ENCODE measurements at regions of chr19 and their contacts with region 1.

Region 1: DNA sequence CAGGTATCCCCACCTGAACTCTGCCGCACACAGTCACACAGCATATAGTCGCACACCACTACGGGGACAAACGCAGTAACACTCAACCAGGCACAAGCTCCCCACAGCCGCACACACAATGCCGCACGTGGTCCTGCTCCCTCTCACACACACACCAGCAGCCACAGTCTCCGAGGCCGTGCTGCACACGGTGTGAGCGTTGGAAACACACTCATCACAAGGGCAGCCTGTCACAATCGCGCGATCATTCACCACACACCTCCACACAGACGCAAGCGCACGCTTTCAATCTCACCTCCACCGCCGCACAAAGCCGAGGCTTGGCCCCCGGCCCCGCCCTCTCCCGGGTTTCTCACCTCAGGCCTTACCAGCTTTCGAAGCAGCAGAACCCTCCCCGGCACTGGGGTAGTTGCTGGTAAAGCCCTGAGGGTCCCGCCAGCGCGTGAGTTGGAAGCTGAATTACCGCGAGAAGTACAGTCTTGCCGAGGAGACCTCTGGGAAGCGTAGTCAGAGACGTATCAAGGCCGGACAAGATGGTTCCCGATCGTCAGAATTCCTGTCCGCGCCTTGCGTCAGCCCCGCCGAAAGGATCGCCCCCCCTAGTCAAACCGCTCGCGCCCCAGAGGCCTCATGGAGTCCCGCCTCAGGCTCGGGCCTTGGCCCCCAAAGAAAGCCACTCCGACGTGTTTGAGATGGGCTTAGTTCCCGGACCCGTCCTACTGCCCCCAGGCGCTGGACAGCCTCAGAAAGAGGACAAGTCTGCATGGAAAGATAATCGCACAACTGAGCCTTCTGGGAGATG is at the start of gene ZNF566:
- H3K4me3 ChIP-seq: peak within 1 kb of the TSS; percentile 58
- H3K27ac ChIP-seq: peak within 1 kb of the TSS; percentile 95
- H3K4me1 ChIP-seq: 0 out of 2 replicates have a peak, but pooled peaks cover 2% of the 10 kb centered on the region
- CTCF ChIP-seq: peak; percentile 66

Region 2: GRCh38 chr19:36214386-36215275 is 274.7 kb before region 1 on chr19 and contains the starts of genes ZNF146 and ZNF565:
- CTCF ChIA-PET with region 1: no interaction called
- POLR2A ChIA-PET with region 1: interaction called, 17 read pairs
- H3K4me3 ChIP-seq: peak within 1 kb of the TSS; percentile 67
- H3K27ac ChIP-seq: peak within 1 kb of the TSS; percentile 93
- H3K4me1 ChIP-seq: peaks cover 7% of the 10 kb centered on the region
- CTCF ChIP-seq: peak; percentile 75; the same call in 1 of the 2 replicates

Region 3: GRCh38 chr19:36404498-36404897 is 84.8 kb before region 1 on chr19:
- CTCF ChIA-PET with region 1: interaction called, 3 read pairs
- POLR2A ChIA-PET with region 1: interaction called, 15 read pairs
- H3K4me3 ChIP-seq: no peak overlapping the region
- H3K27ac ChIP-seq: no peak overlapping the region
- H3K4me1 ChIP-seq: no peaks in the 10 kb centered on the region
- CTCF ChIP-seq: no peak

Region 4: GRCh38 chr19:36460046-36460445 is 29.3 kb before region 1 on chr19:
- CTCF ChIA-PET with region 1: no interaction called
- POLR2A ChIA-PET with region 1: no interaction called
- H3K4me3 ChIP-seq: no peak overlapping the region
- H3K27ac ChIP-seq: no peak overlapping the region
- H3K4me1 ChIP-seq: no peaks in the 10 kb centered on the region
- CTCF ChIP-seq: no peak

Region 5: DNA sequence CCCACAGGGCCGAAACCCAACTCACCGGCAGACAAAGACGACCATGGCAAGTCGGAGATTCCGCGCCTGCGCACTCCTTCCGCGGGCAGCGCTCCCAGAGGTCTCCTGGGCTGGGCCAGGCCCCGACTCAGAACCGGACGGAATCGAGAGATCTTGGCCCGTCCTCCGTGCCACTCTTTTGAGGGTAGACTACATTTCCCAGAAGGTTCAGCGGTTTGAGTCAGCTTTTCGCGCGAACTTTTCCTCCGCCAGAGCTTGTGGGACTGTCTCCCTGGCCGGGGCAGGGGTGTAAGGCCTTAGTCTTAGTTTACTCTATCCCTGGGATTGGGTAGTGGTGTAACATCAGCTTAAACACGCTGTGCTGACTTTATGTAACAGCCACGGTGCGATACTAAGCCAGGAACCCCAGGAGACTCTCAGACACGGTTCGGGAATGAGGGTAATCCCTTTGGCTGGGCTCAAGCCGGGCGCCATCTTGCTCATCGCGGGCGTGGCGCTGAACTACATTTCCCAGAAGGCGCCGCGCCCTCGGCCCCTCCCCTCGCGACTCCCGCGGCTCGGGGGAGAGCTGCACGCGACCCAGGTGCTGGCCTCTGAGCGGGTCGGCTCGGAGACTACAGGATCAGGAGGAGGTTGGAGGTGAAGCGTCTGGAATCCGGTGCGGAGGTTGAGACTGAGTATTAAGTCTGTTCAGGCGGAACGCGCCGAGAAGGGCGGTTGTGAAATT is 39.0 kb after region 1 on chr19 and contains the start of gene ZNF260:
- CTCF ChIA-PET with region 1: interaction called, 3 read pairs
- POLR2A ChIA-PET with region 1: interaction called, 56 read pairs
- H3K4me3 ChIP-seq: peak within 1 kb of the TSS; percentile 91
- H3K27ac ChIP-seq: peak within 1 kb of the TSS; percentile 96
- H3K4me1 ChIP-seq: peaks cover 8% of the 10 kb centered on the region; the same call in 1 of the 2 replicates
- CTCF ChIP-seq: peak; percentile 45; the same call in 1 of the 2 replicates

Measured in HEK293 (cell line).